Left ventricle myocardium inferior (tissue), 1 donor: ENCODE measurements at regions of chr5 and their contacts with region 1.

Region 1: DNA sequence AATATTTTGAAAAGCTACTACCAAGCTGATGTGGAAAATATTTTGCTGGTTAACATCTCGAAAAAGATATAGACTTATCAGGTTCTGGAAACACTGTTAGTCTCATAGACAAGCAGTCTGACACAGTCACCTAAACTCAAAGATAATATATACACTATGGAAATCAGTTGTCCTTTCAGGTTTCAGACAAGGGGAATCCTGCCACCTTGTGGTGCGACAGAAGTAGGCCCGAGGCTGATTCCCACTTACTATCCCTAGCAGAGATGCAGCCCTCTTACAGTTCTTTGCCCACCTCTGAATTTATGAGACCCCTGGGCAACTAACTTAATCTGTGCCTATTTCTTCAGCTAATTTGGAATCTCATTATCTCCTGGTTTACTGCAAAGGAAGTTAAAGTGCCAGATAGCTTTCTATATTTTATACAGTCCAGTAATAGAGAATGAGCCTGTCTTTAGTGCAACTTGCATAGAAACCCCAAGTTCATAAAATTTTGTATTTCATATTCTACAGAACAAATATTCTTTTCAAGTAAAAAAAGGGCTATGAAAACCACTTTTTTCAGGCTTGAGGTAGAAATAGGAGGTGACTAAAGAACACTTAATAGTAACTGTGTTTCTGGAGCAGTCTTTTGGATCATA is 16.9 kb downstream of the RAD1 start:
- DNase-seq: peak; percentile 36
- H3K4me3 ChIP-seq: no peak overlapping the region
- H3K27ac ChIP-seq: no peak overlapping the region
- H3K4me1 ChIP-seq: no peaks in the 10 kb centered on the region
- H3K27me3 ChIP-seq: no peaks in the 10 kb centered on the region
- CTCF ChIP-seq: peak; percentile 92

Region 2: DNA sequence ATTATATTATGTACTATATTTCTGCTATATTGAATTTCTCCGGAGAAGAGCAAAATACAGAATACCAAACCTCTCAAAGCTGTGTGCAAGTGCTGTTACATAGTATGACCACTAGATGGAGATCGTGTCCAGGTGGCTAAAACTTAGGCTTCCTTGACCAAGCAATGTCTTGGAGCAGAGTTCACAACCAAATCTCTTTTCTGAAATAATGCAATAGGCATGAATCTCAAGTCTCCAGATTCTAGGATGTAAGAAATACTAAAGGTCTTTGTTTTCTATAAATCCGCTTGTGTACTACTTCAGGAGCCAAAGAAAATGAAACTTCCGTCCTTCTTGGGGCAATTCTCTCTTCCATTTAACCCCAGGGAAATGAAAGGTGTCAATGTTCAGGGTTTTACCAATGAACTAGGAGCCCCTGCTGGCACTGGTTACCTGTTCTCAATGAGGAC is 423.8 kb before region 1 on chr5:
- intact Hi-C with region 1: loop called (anchors 5 kb)
- DNase-seq: no peak
- H3K4me3 ChIP-seq: no peak overlapping the region
- H3K27ac ChIP-seq: no peak overlapping the region
- H3K4me1 ChIP-seq: no peaks in the 10 kb centered on the region
- H3K27me3 ChIP-seq: peaks cover 25% of the 10 kb centered on the region
- CTCF ChIP-seq: peak; percentile 97

Region 3: DNA sequence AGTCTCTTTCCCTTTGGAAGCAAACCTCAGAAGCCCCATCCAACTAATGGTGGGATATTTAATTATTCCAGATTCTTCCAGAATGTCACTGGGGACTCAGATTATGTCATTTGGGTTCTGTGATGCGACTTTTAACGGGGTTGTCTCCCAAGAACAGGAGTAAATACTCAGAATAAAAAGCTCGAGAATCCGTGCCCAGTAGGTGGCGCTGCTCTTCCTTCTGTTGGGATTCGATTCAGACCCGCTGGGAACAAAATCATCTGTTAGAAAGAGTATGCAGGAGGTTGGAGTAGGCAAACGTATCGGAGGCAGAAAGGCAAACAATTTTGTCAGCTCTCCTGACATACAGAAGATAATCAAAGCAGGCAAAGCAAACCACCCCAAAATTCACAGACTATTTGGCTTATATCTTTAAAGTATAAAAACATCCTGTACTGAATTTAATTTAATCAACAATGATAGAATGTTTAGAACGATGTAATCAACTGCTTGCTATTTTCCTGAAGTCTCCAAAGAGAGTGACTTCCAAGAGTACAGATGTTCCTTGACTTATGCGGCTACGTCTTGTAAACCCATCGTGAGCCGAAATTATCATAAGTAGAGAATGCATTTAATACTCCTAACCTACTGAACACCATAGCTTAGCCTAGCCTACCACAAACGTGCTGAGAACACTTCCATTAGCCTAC is 412.1 kb before region 1 on chr5:
- intact Hi-C with region 1: loop called (anchors 5 kb)
- DNase-seq: peak; percentile 75
- H3K4me3 ChIP-seq: no peak overlapping the region
- H3K27ac ChIP-seq: no peak overlapping the region
- H3K4me1 ChIP-seq: peaks cover 8% of the 10 kb centered on the region
- H3K27me3 ChIP-seq: peaks cover 10% of the 10 kb centered on the region
- CTCF ChIP-seq: peak; percentile 87

Region 4: DNA sequence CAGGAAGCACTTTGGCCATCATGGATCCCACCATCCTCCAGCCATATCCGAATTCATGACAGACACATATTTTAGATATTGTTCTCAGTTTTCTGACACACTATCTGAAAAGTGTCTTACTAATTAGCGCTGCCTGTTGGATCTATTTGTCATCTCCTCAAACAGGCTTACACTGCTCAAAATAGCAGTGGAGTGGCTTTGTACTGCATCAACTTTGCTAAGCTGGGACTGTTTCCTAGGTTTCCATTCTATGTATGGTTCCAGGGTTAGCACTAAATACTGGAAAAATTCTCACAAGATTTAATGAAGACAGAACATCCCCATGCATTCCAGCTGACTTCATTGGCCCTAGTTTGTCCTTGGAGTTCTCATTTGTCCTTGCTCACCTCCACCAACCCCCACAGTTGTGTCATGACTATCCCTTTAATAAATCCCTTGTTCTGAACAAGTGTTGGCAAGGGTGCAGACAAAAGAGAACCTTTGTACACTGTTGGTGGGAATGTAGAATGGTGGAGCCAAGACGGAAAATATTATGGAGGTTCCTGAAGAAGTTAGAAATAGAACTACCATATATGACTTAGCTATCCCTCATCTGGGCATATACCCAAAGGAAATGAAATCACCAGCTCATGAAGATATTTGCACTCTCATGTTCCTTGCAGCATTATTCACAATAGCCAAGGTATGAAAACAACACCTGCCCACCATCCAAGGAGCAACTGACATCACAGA is 378.7 kb before region 1 on chr5:
- intact Hi-C with region 1: loop called (anchors 2 kb)
- DNase-seq: no peak
- H3K4me3 ChIP-seq: no peak overlapping the region
- H3K27ac ChIP-seq: no peak overlapping the region
- H3K4me1 ChIP-seq: no peaks in the 10 kb centered on the region
- H3K27me3 ChIP-seq: no peaks in the 10 kb centered on the region
- CTCF ChIP-seq: no peak

Region 5: GRCh38 chr5:34932791-34933346 is 34.5 kb after region 1 on chr5:
- intact Hi-C with region 1: no loop called
- DNase-seq: no peak
- H3K4me3 ChIP-seq: no peak overlapping the region
- H3K27ac ChIP-seq: no peak overlapping the region
- H3K4me1 ChIP-seq: peaks cover 36% of the 10 kb centered on the region
- H3K27me3 ChIP-seq: no peaks in the 10 kb centered on the region
- CTCF ChIP-seq: no peak